ENCODE measurements at regions of chr4 and their contacts with region 1.

Region 1: DNA sequence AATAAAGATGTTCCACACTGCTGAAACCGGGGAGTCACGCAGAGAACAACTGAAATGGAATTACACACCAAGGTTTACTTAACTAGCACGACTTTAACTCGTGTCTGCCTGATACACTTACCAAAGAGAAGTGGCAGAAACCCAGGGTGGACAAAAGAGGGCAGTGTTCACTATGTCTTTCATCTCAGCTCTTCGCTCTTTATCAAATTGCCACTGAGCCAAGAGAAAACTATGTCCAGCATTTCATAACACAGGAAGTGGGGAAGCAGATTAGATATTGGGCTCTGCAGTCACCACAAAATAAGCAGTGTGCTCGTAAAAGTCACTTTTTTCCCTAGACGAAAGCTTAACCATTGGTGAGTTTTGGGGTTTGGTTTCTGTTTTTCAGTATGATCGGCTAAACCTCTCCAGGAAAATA is 155.7 kb downstream of the CHIC2 start:
- DNase-seq: peak; percentile 8
- ATAC-seq: peak; percentile 83
- H3K4me3 ChIP-seq: no peak overlapping the region
- H3K27ac ChIP-seq: no peak overlapping the region
- H3K4me1 ChIP-seq: no peaks in the 10 kb centered on the region
- H3K27me3 ChIP-seq: peaks cover 0 to 3% of the 10 kb centered on the region in 2 experiments; a peak in 1 of 4 replicates
- CTCF ChIP-seq: peak; percentile 58 to 71 (median 59); a peak in 5 of 6 replicates
- EP300 ChIP-seq: no peak
- POLR2A ChIP-seq: no peak
- RAD21 ChIP-seq: peak; percentile 60

Region 2: GRCh38 chr4:53920116-53920515 is 11.4 kb after region 1 on chr4:
- CTCF ChIA-PET with region 1: interaction called, 14 read pairs
- POLR2A ChIA-PET with region 1: interaction called, 3 read pairs
- RAD21 ChIA-PET with region 1: interaction called, 3 read pairs
- SMC1A ChIA-PET with region 1: interaction called, 6 read pairs
- in situ Hi-C with region 1: no loop called
- intact Hi-C with region 1: no loop called
- DNase-seq: no peak
- ATAC-seq: no peak
- H3K4me3 ChIP-seq: no peak overlapping the region
- H3K27ac ChIP-seq: no peak overlapping the region
- H3K4me1 ChIP-seq: no peaks in the 10 kb centered on the region
- H3K27me3 ChIP-seq: 0 out of 4 replicates have a peak, but pooled peaks cover 0 to 2% of the 10 kb centered on the region in 2 experiments
- CTCF ChIP-seq: no peak
- EP300 ChIP-seq: no peak
- POLR2A ChIP-seq: no peak
- RAD21 ChIP-seq: no peak

Region 3: GRCh38 chr4:54217642-54218495 is 309.2 kb after region 1 on chr4:
- CTCF ChIA-PET with region 1: interaction called, 20 read pairs
- POLR2A ChIA-PET with region 1: no interaction called
- RAD21 ChIA-PET with region 1: no interaction called
- SMC1A ChIA-PET with region 1: interaction called, 11 read pairs
- in situ Hi-C with region 1: no loop called
- intact Hi-C with region 1: loop called (anchors 1 kb)
- DNase-seq: no peak
- ATAC-seq: peak; percentile 97
- H3K4me3 ChIP-seq: no peak overlapping the region
- H3K27ac ChIP-seq: no peak overlapping the region
- H3K4me1 ChIP-seq: no peaks in the 10 kb centered on the region
- H3K27me3 ChIP-seq: no peaks in the 10 kb centered on the region; a peak in 2 of 4 replicates
- CTCF ChIP-seq: peak; percentile 71 to 90 (median 76); a peak in 5 of 6 replicates
- EP300 ChIP-seq: no peak
- POLR2A ChIP-seq: no peak
- RAD21 ChIP-seq: peak; percentile 92